RWPE1 (cell line): ENCODE measurements at regions of chr9 and their contacts with region 1.

Region 1: GRCh38 chr9:86434039-86434726 is 80.0 kb upstream of the TUT7 start:
- DNase-seq: peak; percentile 59
- H3K27ac ChIP-seq: peak overlapping the region; percentile 59
- CTCF ChIP-seq: peak; percentile 81

Region 2: GRCh38 chr9:86413966-86414880 is 20.0 kb before region 1 on chr9:
- CTCF ChIA-PET with region 1: interaction called, 18 read pairs
- POLR2A ChIA-PET with region 1: no interaction called
- DNase-seq: peak; percentile 54
- H3K27ac ChIP-seq: no peak overlapping the region
- CTCF ChIP-seq: peak; percentile 79

Region 3: DNA sequence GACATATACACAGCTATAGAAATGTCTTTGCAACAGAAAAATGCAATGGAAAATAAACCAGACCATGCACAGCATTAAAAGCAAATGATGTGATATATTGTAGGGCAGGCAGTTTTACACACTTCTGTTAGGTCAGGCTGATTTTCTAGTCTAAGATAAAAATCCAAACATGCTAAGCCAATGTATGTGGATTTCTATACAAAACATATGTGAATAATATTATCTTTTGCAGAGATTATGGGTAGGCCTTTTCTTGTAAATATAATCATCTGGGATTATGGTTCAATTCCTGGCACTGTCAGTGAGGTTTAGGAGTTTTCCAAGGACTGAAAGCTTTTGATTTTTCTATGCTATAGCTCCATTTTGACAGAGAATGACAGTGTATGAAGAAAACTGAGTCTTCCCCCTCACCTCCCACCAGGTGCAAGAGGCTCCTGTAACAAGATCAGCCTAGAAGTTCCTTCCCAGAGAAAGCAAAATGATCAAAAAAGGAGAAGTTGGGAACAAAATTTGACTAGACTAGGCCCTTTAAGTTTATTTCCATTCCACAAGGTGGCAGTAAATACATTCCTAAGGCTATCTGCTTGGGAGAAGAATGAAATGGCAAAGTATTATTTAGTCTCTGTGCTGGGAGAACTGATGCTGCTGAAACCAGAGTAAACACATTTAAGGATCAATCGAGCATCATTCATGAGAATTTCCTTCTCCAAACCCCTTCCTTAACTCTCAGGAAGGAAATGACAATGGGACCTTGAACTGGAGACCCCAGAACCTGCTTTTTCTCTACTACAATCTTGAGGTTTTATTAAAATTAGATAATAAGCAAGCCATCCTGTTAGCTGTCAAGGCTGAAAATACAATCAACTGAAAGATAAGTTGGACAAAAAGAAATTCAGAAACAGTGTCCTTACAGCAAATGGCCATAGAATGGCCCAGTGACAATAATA is 53.0 kb after region 1 on chr9:
- CTCF ChIA-PET with region 1: interaction called, 11 read pairs
- POLR2A ChIA-PET with region 1: no interaction called
- DNase-seq: peak; percentile 66
- H3K27ac ChIP-seq: no peak overlapping the region
- CTCF ChIP-seq: peak; percentile 49

Region 4: GRCh38 chr9:86948074-86948929 is 514.1 kb after region 1 on chr9:
- CTCF ChIA-PET with region 1: interaction called, 11 read pairs
- POLR2A ChIA-PET with region 1: no interaction called
- DNase-seq: peak; percentile 71
- H3K27ac ChIP-seq: peak overlapping the region; percentile 99
- CTCF ChIP-seq: peak; percentile 94

Region 5: DNA sequence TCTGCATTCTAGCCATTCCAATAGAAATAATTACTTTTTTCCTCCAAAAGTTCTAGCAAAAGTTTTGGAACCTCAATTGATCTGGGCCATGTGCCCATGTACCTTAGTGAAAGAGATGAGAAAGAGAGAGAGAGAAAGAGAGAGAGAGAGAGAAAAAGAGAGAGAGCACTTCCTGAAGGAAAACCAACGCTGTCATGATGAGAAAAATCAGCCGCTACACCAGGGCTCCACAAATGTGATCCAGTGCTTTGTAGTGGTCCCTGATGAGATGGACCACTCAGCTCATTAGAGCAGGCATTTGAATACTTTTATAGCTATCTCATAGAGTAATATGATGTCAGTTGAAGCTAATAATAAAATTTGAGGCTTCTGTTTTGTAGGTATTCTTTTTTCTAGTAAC is 520.9 kb after region 1 on chr9:
- CTCF ChIA-PET with region 1: interaction called, 11 read pairs
- POLR2A ChIA-PET with region 1: no interaction called
- DNase-seq: no peak
- H3K27ac ChIP-seq: no peak overlapping the region
- CTCF ChIP-seq: no peak